Adrenal gland (tissue), 19 donors: ENCODE measurements at regions of chr20 and their contacts with region 1.

Region 1: DNA sequence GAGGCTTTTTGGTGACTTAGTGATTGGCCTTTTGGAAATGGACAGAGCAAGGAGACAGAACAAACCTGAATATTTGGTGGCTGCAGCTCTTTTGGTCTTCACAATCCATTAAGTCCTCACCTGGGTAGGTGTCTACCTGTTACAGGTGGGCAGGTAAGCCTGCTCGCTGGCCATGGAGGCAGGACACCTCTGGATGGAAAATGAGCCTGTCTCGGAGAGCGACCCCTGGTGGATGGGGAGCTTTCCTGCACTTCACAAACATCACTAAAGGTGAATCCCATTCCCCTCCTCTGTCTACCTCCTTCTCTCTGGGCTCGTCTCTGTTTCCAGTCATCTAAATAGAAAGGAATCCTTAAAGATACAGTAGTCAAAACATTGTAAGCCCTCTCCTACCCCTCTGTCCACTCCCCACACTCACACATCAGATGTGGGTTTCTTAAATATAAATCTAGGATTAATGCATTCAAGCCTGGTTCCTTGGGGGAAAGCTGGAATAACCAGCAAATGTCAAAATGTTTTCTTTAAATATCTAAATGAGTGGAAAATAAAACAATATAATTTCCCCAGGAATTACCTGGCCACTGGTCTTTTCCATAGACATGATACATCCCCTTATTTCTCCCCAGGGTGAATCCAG is 304.9 kb downstream of the CDH26 start:
- DNase-seq: peak in 6 of 7 donors; percentile 26 to 61 (median 38)
- H3K4me3 ChIP-seq: no peak overlapping the region
- H3K27ac ChIP-seq: no peak overlapping the region
- H3K4me1 ChIP-seq: no peaks in the 10 kb centered on the region
- H3K27me3 ChIP-seq: no peaks in the 10 kb centered on the region
- CTCF ChIP-seq: peak; percentile 50 to 73 (median 64)
- POLR2A ChIP-seq: no peak

Region 2: DNA sequence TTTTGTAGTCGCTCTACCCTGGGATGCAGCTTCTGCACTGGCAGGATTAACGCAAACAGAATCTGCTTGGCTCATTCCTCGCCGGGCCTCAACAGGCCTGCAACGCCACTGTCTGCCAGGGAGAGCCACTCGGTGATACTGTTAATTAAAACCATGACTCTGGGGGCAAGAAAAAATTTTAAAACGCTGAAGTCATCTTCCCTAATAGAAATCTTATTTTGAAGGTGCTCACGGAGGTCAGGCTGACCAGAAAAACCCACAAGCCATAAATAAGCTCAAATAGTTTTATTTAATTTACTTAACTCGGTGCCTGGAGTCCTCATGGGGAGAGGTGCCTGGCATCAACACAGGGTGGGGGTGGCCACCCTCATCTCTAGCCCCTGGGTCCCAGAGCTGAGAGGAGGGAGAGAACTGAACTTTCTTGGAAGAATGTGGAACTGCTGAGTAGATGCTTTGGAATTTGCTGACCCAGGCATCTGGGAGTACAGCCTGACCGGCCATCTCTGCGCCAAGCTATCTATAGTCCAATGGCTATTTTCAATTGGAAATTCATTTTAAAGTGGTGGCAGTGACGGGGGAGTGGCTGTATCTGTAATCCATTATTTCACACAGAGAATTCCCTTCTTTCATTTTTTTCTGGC is 200.2 kb before region 1 on chr20:
- intact Hi-C with region 1: loop called in 1 of 2 experiments (anchors 10 kb)
- DNase-seq: peak in 1 of 7 donors; percentile 20
- H3K4me3 ChIP-seq: no peak overlapping the region
- H3K27ac ChIP-seq: peak overlapping the region in 2 of 5 donors; percentile 6 to 34
- H3K4me1 ChIP-seq: peaks cover 0 to 15% of the 10 kb centered on the region in 2 donors
- H3K27me3 ChIP-seq: no peaks in the 10 kb centered on the region
- CTCF ChIP-seq: no peak
- POLR2A ChIP-seq: no peak

Region 3: DNA sequence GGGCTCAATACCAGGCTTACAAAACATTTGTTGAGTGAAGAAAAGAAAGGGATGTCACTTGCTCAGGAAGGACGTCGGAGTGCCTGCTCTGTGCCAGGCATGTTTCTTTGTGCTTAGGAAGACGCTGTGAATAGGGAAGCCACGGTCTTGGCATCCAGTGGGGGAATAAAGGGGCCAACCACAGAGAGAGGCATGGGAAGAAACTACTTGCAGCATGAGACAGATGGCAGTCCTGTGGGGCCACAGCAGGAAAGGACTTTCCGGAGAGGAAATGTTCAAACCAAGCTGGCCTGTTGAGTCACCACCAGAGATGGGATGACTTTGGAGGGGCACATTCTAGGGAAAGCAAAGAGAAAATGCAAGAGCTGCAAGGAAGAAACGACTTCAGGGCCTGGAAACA is 131.7 kb before region 1 on chr20:
- intact Hi-C with region 1: no loop called
- DNase-seq: peak in 3 of 7 donors; percentile 23 to 58 (median 37)
- H3K4me3 ChIP-seq: no peak overlapping the region
- H3K27ac ChIP-seq: no peak overlapping the region
- H3K4me1 ChIP-seq: no peaks in the 10 kb centered on the region
- H3K27me3 ChIP-seq: no peaks in the 10 kb centered on the region
- CTCF ChIP-seq: no peak
- POLR2A ChIP-seq: no peak

Region 4: GRCh38 chr20:60203451-60203850 is 59.6 kb before region 1 on chr20:
- intact Hi-C with region 1: no loop called
- DNase-seq: no peak
- H3K4me3 ChIP-seq: no peak overlapping the region
- H3K27ac ChIP-seq: no peak overlapping the region
- H3K4me1 ChIP-seq: no peaks in the 10 kb centered on the region
- H3K27me3 ChIP-seq: no peaks in the 10 kb centered on the region
- CTCF ChIP-seq: no peak
- POLR2A ChIP-seq: no peak